ENCODE measurements at regions of chr2 and their contacts with region 1.

Region 1: GRCh38 chr2:190088917-190089316 is 26.4 kb upstream of the MSTN start:
- DNase-seq: peak; percentile 24 to 77 (median 30)
- ATAC-seq: peak; percentile 79
- H3K4me3 ChIP-seq: no peak overlapping the region
- H3K27ac ChIP-seq: no peak overlapping the region
- H3K4me1 ChIP-seq: no peaks in the 10 kb centered on the region; a peak in 2 of 5 replicates
- H3K27me3 ChIP-seq: no peaks in the 10 kb centered on the region
- CTCF ChIP-seq: peak; percentile 61 to 77 (median 65); a peak in 5 of 6 replicates
- EP300 ChIP-seq: no peak
- POLR2A ChIP-seq: no peak
- RAD21 ChIP-seq: peak; percentile 86 to 90

Region 2: DNA sequence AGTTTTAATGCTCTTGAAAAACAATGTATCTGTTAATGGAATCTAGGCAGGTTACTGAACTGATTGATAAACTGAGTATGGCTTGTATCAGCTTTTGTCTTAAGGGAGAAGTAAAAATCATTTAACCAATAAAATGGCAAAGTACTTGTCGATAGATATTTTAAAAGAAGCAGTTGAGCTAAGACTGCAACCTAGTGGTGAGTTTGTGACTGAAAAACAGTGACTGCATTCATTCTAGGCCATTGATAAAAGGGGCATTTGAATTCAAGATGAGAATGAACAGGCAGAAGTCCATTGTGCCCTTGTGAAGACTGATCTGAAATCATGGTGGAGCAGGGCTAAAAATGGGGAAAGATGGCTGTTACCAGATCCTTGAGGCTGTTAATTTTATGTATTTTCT is 33.1 kb after region 1 on chr2:
- CTCF ChIA-PET with region 1: interaction called, 4 read pairs
- POLR2A ChIA-PET with region 1: interaction called, 3 read pairs
- in situ Hi-C with region 1: no loop called
- intact Hi-C with region 1: loop called (anchors 1 kb)
- DNase-seq: peak in 2 of 4 experiments; percentile 15 to 17
- ATAC-seq: peak; percentile 61
- H3K4me3 ChIP-seq: no peak overlapping the region
- H3K27ac ChIP-seq: no peak overlapping the region
- H3K4me1 ChIP-seq: no peaks in the 10 kb centered on the region; a peak in 1 of 5 replicates
- H3K27me3 ChIP-seq: no peaks in the 10 kb centered on the region
- CTCF ChIP-seq: peak; percentile 27 to 47 (median 37); a peak in 4 of 6 replicates
- EP300 ChIP-seq: no peak
- POLR2A ChIP-seq: no peak
- RAD21 ChIP-seq: peak in 1 of 2 experiments; percentile 55; a peak in 2 of 4 replicates

Region 3: GRCh38 chr2:190277234-190278112 is 188.6 kb after region 1 on chr2:
- CTCF ChIA-PET with region 1: interaction called, 3 read pairs
- POLR2A ChIA-PET with region 1: no interaction called
- in situ Hi-C with region 1: loop called (anchors 5 kb)
- intact Hi-C with region 1: loop called (anchors 1 kb)
- DNase-seq: peak; percentile 24 to 66 (median 43)
- ATAC-seq: peak; percentile 99
- H3K4me3 ChIP-seq: no peak overlapping the region
- H3K27ac ChIP-seq: peak overlapping the region; percentile 78
- H3K4me1 ChIP-seq: peaks cover 0 to 10% of the 10 kb centered on the region in 2 experiments; a peak in 2 of 5 replicates
- H3K27me3 ChIP-seq: no peaks in the 10 kb centered on the region
- CTCF ChIP-seq: peak; percentile 33 to 64 (median 38); a peak in 4 of 6 replicates
- EP300 ChIP-seq: no peak
- POLR2A ChIP-seq: no peak
- RAD21 ChIP-seq: peak; percentile 64 to 73

Region 4: DNA sequence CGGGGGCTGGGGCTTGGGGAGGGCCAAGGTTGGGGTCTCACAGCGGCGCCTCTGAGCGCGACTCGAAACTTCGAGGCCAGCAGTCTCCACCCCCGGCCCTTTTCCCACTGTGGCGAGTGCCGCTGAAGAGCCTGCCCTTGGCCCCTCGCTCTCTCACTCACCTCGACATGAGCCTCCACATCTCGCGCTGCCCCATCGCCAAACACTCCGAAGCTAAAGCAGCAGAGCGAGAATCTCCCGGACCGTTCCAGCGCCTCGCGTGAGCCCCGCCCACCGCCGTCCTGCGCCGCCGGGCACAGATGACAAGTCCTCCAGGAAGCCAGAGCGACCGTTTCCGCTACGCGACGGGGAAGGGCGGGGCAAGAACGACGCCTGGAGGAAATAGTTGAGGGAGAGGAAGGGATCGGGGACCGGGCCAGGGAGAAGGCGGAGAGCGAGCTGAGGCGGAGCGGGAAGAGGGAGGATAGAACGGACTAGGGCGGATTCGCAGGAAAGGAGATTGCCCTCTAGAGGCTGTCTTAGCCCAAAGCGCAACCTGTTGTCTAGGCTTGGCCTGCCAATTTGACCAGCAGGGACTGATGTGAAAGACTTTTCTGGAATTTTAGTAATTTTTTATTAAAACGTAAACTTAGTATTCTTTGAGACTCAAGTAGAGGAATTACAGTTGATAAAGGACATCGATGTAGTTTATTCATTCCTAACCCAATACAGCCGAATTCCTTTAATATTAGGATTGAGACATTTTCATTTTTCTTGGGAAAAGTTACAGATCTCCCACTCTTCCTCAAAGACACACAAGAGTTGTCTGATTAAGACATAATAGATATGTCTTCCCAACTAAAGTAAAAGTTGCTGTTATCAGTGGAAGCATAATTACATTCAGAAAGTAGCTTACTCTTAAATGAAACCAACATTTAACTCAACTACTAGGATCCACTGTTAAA is 230.9 kb after region 1 on chr2 and contains the start of gene HIBCH:
- CTCF ChIA-PET with region 1: no interaction called
- POLR2A ChIA-PET with region 1: no interaction called
- in situ Hi-C with region 1: no loop called
- intact Hi-C with region 1: loop called (anchors 2 kb)
- DNase-seq: peak; percentile 75 to 98 (median 82)
- ATAC-seq: peak; percentile 95
- H3K4me3 ChIP-seq: peak within 1 kb of the TSS; percentile 72
- H3K27ac ChIP-seq: peak within 1 kb of the TSS; percentile 52
- H3K4me1 ChIP-seq: peaks cover 0 to 12% of the 10 kb centered on the region in 2 experiments; a peak in 3 of 5 replicates
- H3K27me3 ChIP-seq: no peaks in the 10 kb centered on the region
- CTCF ChIP-seq: peak; percentile 83 to 85 (median 84)
- EP300 ChIP-seq: peak; percentile 16
- POLR2A ChIP-seq: peak; percentile 71
- RAD21 ChIP-seq: peak; percentile 9 to 31; a peak in 1 of 4 replicates
- polyA plus RNA-seq, gene HIBCH: 52.8 to 65.4 TPM

Region 5: DNA sequence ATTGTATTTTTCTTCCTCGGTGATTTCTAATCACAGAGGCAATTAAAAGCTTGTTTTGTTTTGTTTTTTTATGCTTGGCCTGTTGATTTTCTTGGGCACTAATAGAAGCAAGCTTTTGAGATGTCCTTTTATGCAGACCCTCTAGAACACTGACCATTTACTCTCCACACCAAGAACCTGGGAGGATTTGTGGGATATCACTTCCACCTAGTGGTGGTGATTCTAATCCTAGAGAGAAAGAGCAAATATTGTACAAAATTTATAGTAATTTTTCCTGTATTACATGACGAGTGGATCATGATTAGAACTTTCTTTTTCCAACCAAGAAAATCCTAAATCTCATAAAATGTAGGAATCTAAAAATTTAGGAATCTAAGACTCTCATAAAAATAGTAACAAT is 422.2 kb after region 1 on chr2:
- CTCF ChIA-PET with region 1: interaction called, 6 read pairs
- POLR2A ChIA-PET with region 1: no interaction called
- in situ Hi-C with region 1: loop called (anchors 10 kb)
- intact Hi-C with region 1: loop called (anchors 5 kb)
- DNase-seq: peak in 2 of 4 experiments; percentile 43 to 58
- ATAC-seq: peak; percentile 86
- H3K4me3 ChIP-seq: no peak overlapping the region
- H3K27ac ChIP-seq: no peak overlapping the region
- H3K4me1 ChIP-seq: no peaks in the 10 kb centered on the region; a peak in 2 of 5 replicates
- H3K27me3 ChIP-seq: no peaks in the 10 kb centered on the region
- CTCF ChIP-seq: peak; percentile 44 to 69 (median 50); a peak in 4 of 6 replicates
- EP300 ChIP-seq: no peak
- POLR2A ChIP-seq: no peak
- RAD21 ChIP-seq: peak; percentile 78 to 90

Region 6: GRCh38 chr2:190804182-190804795 is 715.4 kb after region 1 on chr2:
- CTCF ChIA-PET with region 1: no interaction called
- POLR2A ChIA-PET with region 1: no interaction called
- in situ Hi-C with region 1: no loop called
- intact Hi-C with region 1: loop called (anchors 10 kb)
- DNase-seq: peak in 1 of 4 experiments; percentile 13
- ATAC-seq: no peak
- H3K4me3 ChIP-seq: no peak overlapping the region
- H3K27ac ChIP-seq: no peak overlapping the region
- H3K4me1 ChIP-seq: no peaks in the 10 kb centered on the region; a peak in 1 of 5 replicates
- H3K27me3 ChIP-seq: no peaks in the 10 kb centered on the region
- CTCF ChIP-seq: peak; percentile 22 to 63 (median 43); a peak in 4 of 6 replicates
- EP300 ChIP-seq: no peak
- POLR2A ChIP-seq: no peak
- RAD21 ChIP-seq: peak; percentile 56 to 63